CD14-positive monocyte (primary cell): ENCODE measurements at regions of chr3 and their contacts with region 1.

Region 1: GRCh38 chr3:195442573-195443390 is at the start of gene ACAP2:
- DNase-seq: peak; percentile 99 to 100 (median 99)
- H3K4me3 ChIP-seq: peak within 1 kb of the TSS; percentile 85 to 95 (median 87)
- H3K4me3 Mint-ChIP-seq: peak within 1 kb of the TSS; percentile 90 to 96
- H3K27ac ChIP-seq: peak within 1 kb of the TSS; percentile 95
- H3K27ac Mint-ChIP-seq: peak within 1 kb of the TSS; percentile 92 to 98 (median 97)
- H3K4me1 ChIP-seq: peaks cover 50 to 67% of the 10 kb centered on the region in 2 donors
- H3K4me1 Mint-ChIP-seq: peaks cover 62% of the 10 kb centered on the region
- H3K27me3 ChIP-seq: no peaks in the 10 kb centered on the region
- H3K27me3 Mint-ChIP-seq: no peaks in the 10 kb centered on the region
- CTCF ChIP-seq: no peak
- polyA plus RNA-seq, gene ACAP2: 41.5 to 96.5 (median 71.6) TPM

Region 2: DNA sequence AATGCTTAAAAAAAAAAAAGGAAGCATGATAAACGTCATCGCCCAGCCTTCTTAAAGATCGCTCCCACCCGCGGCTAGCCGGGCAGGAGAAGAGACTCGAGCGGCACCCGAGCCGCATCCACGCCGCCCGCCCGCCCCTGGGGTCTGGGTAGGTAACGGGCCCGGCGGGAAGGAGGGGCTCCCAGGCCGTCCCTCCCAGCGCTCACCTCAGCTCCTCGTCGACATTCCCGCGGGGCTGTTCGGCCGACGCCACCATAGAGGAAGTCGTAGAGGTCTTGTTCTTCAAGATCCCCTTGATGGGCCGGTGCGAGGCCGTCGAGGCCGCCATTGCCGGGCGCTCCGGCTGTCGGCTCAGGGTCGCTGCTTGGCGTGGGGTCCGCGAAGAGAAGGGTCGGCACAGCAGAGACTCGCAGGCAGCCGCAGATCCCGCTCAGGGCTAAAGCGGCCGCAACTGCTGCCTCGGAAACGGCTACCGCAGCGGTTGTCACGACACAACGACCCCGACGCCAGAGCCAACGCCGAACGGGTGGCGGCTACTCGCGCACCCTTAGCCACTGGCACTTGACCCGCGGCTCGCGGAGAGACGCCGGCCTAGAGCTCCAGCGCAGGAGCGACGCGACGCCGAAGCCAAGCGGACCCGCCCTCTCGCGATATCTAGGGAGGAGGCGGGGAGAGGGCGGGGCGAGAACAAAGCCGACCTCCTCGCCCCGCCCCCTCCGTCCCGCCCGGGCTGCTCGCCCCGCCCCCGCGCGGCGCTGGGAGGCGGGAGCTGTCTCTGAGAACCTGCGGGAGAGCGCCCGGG is 100.1 kb after region 1 on chr3 and contains the start of gene PPP1R2:
- intact Hi-C with region 1: loop called in 1 of 2 experiments (anchors 5 kb)
- DNase-seq: peak; percentile 87 to 89 (median 88)
- H3K4me3 ChIP-seq: peak within 1 kb of the TSS; percentile 73 to 91 (median 89)
- H3K4me3 Mint-ChIP-seq: peak within 1 kb of the TSS; percentile 89 to 94
- H3K27ac ChIP-seq: peak within 1 kb of the TSS; percentile 84 to 92
- H3K27ac Mint-ChIP-seq: peak within 1 kb of the TSS; percentile 93 to 98 (median 96)
- H3K4me1 ChIP-seq: peaks cover 30 to 42% of the 10 kb centered on the region in 2 donors
- H3K4me1 Mint-ChIP-seq: peaks cover 57% of the 10 kb centered on the region
- H3K27me3 ChIP-seq: peaks cover 8 to 16% of the 10 kb centered on the region in 2 donors
- H3K27me3 Mint-ChIP-seq: peaks cover 17 to 25% (median 24%) of the 10 kb centered on the region in 3 donors
- CTCF ChIP-seq: no peak
- polyA plus RNA-seq, gene PPP1R2: 21.0 to 121 (median 118) TPM